CD8-positive, alpha-beta T cell (primary cell): ENCODE measurements at regions of chr1 and their contacts with region 1.

Region 1: DNA sequence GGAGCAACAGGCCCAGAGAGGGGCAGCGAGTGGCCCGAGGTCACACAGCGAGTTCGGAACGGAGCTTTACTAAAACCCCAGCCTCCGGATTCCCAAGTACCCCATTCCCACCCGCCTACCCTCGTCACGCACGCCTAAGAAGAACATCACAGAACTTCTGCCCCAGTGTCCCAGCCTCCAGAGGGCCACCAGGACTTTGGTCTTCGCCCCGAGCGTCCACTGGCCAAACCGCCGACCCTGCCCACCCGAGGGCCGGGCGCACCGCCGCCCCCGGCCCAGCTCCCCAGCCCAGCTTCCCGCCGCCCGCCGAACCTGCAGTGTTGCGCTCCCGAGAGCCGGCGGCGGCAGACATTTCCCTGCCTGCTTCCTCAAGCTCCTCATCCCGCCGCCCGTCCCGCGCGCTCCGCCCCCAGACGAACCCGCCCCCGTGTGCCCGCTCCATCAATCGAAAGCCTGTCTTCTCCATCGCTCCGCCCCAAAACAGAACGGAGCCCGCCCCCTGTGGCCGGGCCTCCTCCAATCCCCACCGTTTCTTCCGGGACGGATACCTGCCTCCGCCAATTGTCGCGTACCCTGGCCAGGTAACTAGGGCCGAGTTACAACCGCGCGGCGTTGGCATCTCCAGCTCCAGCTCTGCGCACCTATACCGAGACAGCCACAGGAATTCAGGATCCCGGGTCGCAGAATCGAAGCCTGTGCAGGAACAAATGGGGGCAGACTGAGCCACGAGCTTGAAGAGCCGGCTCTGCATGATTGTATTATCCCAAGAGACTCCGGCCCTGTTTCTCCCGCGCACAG is 15.3 kb downstream of the INPP5B start:
- DNase-seq: peak; percentile 96 to 98 (median 97)
- ATAC-seq: peak; percentile 98
- H3K4me3 ChIP-seq: peak overlapping the region; percentile 79 to 89
- H3K4me3 Mint-ChIP-seq: peak overlapping the region; percentile 100
- H3K27ac ChIP-seq: peak overlapping the region; percentile 40 to 66
- H3K27ac Mint-ChIP-seq: peak overlapping the region; percentile 89
- H3K4me1 ChIP-seq: peaks cover 26% of the 10 kb centered on the region
- H3K4me1 Mint-ChIP-seq: peaks cover 40% of the 10 kb centered on the region
- H3K27me3 ChIP-seq: no peaks in the 10 kb centered on the region
- H3K27me3 Mint-ChIP-seq: no peaks in the 10 kb centered on the region
- CTCF ChIP-seq: no peak

Region 2: DNA sequence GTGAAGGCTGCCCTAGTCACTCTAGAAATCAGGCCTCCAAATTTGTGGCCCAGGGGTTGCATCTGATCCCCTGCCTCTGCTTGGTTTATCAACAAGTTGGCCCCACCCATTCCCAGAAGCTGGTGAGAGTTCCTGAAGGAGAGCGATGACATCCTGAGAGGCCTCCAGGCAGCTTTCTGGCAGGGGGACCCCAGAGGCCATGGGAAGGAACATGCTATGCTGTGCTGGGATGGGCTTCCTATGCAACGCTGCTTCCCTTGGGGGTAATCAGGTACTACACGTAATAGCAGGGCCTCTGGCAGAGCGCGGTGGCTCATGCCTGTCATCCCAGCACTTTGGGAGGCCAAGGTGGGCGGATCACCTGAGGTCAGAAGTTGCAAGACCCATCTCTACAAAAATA is 63.8 kb before region 1 on chr1:
- CTCF ChIA-PET with region 1: no interaction called
- POLR2A ChIA-PET with region 1: no interaction called
- intact Hi-C with region 1: no loop called
- DNase-seq: no peak
- ATAC-seq: no peak
- H3K4me3 ChIP-seq: no peak overlapping the region
- H3K4me3 Mint-ChIP-seq: no peak overlapping the region
- H3K27ac ChIP-seq: no peak overlapping the region
- H3K27ac Mint-ChIP-seq: no peak overlapping the region
- H3K4me1 ChIP-seq: no peaks in the 10 kb centered on the region
- H3K4me1 Mint-ChIP-seq: no peaks in the 10 kb centered on the region
- H3K27me3 ChIP-seq: no peaks in the 10 kb centered on the region
- H3K27me3 Mint-ChIP-seq: no peaks in the 10 kb centered on the region
- CTCF ChIP-seq: no peak

Region 3: GRCh38 chr1:37890378-37891014 is 41.1 kb before region 1 on chr1:
- CTCF ChIA-PET with region 1: interaction called, 4 read pairs
- POLR2A ChIA-PET with region 1: no interaction called
- intact Hi-C with region 1: loop called (anchors 2 to 5 kb)
- DNase-seq: peak in 3 of 9 experiments; percentile 9 to 67 (median 56)
- ATAC-seq: peak; percentile 76
- H3K4me3 ChIP-seq: no peak overlapping the region
- H3K4me3 Mint-ChIP-seq: no peak overlapping the region
- H3K27ac ChIP-seq: peak overlapping the region in 1 of 2 experiments; percentile 22
- H3K27ac Mint-ChIP-seq: peak overlapping the region; percentile 67
- H3K4me1 ChIP-seq: peaks cover 5% of the 10 kb centered on the region
- H3K4me1 Mint-ChIP-seq: peaks cover 6% of the 10 kb centered on the region
- H3K27me3 ChIP-seq: no peaks in the 10 kb centered on the region
- H3K27me3 Mint-ChIP-seq: no peaks in the 10 kb centered on the region
- CTCF ChIP-seq: peak; percentile 80

Region 4: DNA sequence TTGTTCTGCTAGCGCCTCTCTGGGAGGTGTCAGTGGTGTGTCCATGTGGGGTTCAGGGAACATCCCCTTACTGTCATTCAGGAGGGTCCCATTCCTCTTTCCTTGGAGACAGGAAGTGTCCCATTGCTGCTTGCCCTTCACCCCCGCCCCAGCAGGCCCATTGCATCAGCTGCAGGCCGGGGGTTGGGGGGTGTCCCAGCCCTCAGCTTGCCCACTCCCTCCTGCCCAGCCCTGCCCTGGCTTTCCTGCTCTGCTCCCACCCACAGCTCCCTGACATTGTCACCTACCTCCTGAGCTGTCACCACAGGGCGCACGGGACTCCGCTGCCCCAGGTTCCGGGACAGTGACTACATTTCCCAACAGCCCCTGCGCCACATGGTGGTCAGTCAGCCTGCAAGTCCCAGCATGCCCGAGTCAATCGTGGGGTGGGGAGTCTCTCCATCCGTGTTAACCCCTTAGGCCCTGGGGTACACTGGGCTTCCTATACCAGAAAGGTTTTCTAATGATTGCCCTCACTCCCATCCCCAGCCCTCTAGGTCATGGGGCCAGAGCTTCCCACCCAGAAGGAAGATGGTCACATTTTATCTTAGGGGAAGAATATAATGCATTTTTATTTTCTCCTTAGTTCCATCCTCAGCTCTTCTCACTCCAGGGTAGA is 15.3 kb after region 1 on chr1 and contains the start of gene INPP5B:
- CTCF ChIA-PET with region 1: interaction called, 3 read pairs
- POLR2A ChIA-PET with region 1: interaction called, 6 read pairs
- intact Hi-C with region 1: loop called in 1 of 2 experiments (anchors 1 kb)
- DNase-seq: peak; percentile 30 to 82 (median 71)
- ATAC-seq: peak; percentile 97
- H3K4me3 ChIP-seq: peak within 1 kb of the TSS; percentile 60 to 64
- H3K4me3 Mint-ChIP-seq: peak within 1 kb of the TSS; percentile 88
- H3K27ac ChIP-seq: peak within 1 kb of the TSS; percentile 14 to 56
- H3K27ac Mint-ChIP-seq: peak within 1 kb of the TSS; percentile 92
- H3K4me1 ChIP-seq: peaks cover 17% of the 10 kb centered on the region
- H3K4me1 Mint-ChIP-seq: peaks cover 18% of the 10 kb centered on the region
- H3K27me3 ChIP-seq: no peaks in the 10 kb centered on the region
- H3K27me3 Mint-ChIP-seq: no peaks in the 10 kb centered on the region
- CTCF ChIP-seq: no peak
- total RNA-seq, gene INPP5B: 11.2 to 12.7 TPM

Region 5: DNA sequence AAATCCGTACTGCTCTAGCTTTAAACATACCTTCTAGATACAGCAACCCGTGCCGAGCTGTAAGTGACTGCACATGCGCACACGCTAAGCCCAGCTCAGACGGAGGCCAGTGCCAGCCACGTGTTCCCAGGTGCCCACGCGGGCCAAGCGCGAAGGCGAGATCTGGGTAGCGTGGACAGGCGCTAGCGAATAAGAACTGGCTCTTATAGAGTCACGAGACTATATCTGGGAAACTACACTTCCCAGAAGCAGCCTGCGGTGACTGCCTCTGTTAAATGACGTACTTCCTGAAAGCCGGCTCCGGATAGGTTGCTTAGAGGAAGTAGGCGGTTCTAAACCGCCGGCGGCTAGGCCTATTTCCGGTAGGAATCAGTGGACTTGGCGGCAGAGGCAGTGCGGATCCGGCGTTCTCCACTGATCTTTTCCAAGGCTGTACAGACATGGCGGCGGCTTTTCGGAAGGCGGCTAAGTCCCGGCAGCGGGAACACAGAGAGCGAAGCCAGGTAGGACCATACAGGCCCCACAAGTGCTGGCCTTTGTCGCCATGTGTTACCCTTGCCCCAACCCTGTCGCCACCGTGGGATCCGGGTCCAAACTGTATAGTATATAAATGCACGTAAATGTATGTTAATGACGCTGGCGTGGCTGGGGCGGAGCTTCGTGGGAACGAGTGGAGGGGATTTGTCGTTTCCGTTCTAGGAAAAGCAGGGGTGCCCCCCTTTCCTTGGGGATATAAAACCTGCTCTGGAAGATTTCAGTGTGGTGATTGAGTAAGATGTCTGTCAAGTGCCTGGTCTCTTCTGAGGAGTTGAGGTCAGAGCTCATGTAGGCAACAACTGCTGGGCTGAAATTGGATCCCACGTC is 81.0 kb after region 1 on chr1 and contains the start of gene UTP11:
- CTCF ChIA-PET with region 1: no interaction called
- POLR2A ChIA-PET with region 1: no interaction called
- intact Hi-C with region 1: loop called (anchors 1 to 2 kb)
- DNase-seq: peak; percentile 80 to 97 (median 88)
- ATAC-seq: peak; percentile 86
- H3K4me3 ChIP-seq: peak within 1 kb of the TSS; percentile 66 to 94
- H3K4me3 Mint-ChIP-seq: peak within 1 kb of the TSS; percentile 99
- H3K27ac ChIP-seq: peak within 1 kb of the TSS; percentile 74 to 94
- H3K27ac Mint-ChIP-seq: peak within 1 kb of the TSS; percentile 99
- H3K4me1 ChIP-seq: peaks cover 40% of the 10 kb centered on the region
- H3K4me1 Mint-ChIP-seq: peaks cover 57% of the 10 kb centered on the region
- H3K27me3 ChIP-seq: no peaks in the 10 kb centered on the region
- H3K27me3 Mint-ChIP-seq: no peaks in the 10 kb centered on the region
- CTCF ChIP-seq: no peak
- total RNA-seq, gene UTP11: 12.8 to 14.0 TPM